Naive thymus-derived CD4-positive, alpha-beta T cell (primary cell): ENCODE measurements at regions of chr2 and their contacts with region 1.

Region 1: DNA sequence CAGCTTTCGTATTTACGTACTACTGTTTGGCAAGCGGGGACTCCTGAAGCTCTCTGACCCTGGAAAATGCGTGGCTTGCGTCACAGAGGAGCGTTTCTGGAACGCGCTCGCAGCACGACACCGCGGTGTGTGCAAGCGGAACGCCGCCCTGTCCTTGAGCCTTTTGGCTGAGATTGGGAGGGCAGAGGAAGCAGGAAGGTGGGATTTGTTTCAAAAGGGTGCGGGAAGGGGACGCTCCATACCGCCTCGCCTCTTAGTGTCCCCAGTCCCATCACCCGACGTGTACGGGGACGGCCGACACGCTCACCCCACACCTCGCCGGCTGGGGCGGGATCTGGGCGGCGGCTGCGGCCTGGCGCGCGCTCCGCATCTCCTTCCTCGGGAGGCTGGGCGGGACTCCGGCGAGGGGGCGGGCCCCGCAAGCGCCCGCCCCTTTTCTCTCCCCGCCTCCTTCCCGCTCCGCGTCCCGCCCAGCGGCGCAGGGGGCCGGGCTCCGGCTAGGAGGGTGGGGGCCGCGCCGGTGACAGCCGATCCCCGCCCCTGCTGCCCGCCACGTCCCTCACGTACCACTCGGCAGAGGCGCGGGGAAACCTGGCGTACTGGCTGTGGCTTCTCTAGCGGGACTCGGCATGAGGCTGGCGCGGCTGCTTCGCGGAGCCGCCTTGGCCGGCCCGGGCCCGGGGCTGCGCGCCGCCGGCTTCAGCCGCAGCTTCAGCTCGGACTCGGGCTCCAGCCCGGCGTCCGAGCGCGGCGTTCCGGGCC is at the start of gene PDK1:
- DNase-seq: peak; percentile 89 to 95 (median 94)
- ATAC-seq: peak; percentile 97
- H3K4me3 ChIP-seq: peak within 1 kb of the TSS; percentile 84
- H3K4me3 Mint-ChIP-seq: peak within 1 kb of the TSS; percentile 88 to 99 (median 93)
- H3K27ac ChIP-seq: peak within 1 kb of the TSS; percentile 98
- H3K27ac Mint-ChIP-seq: peak within 1 kb of the TSS; percentile 86 to 97 (median 95)
- H3K4me1 ChIP-seq: peaks cover 10 to 29% of the 10 kb centered on the region in 2 donors
- H3K4me1 Mint-ChIP-seq: peaks cover 37 to 72% (median 64%) of the 10 kb centered on the region in 7 donors
- H3K27me3 ChIP-seq: no peaks in the 10 kb centered on the region
- H3K27me3 Mint-ChIP-seq: peaks cover 0 to 5% (median 0%) of the 10 kb centered on the region in 5 donors
- total RNA-seq, gene PDK1: 56.0 to 70.6 (median 66.6) TPM

Region 2: DNA sequence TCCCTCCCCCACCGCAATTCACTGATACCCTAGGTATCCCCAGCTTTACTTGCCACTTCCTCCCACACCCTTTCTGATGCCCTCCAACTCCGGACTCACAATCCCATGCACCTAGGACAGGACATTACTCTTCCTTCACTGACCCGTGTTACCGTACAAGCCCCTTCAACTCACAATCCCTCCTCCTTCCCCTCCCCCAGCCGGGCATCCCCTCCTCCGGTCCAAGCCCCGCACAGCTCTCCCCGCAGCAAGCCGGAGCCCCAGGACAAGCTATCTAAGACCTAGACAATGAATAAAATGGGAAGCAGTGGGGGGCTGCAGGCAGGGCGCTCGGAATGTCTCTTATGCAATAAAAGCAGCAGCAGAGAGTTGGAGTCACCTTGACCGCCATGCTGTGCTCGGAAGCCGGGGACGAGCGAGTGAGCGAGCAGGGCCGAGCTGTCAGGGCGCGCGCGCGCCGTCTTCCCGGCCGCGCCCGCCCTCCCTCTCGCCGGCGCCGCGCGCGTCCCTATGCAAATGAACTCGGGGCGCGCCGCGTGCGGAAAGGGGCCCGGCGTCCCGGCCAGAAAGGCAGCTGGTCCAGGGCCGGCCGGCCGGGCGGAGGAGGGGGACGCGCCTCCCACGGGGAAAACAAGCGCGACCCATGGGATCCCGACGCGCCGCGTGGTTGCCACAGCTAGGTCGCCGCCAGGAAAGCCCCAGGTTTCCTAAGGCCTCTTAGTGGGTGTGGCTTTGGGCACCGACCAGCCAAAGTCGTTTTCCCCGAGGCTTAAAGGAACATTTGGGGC is 661.7 kb before region 1 on chr2 and contains the start of gene SLC25A12:
- CTCF ChIA-PET with region 1: no interaction called
- POLR2A ChIA-PET with region 1: no interaction called
- intact Hi-C with region 1: loop called (anchors 1 to 10 kb)
- DNase-seq: peak; percentile 53 to 79 (median 65)
- ATAC-seq: peak; percentile 96
- H3K4me3 ChIP-seq: peak within 1 kb of the TSS; percentile 93
- H3K4me3 Mint-ChIP-seq: peak within 1 kb of the TSS; percentile 93 to 98 (median 96)
- H3K27ac ChIP-seq: peak within 1 kb of the TSS; percentile 83
- H3K27ac Mint-ChIP-seq: peak within 1 kb of the TSS; percentile 66 to 94 (median 89)
- H3K4me1 ChIP-seq: peaks cover 11 to 17% of the 10 kb centered on the region in 2 donors
- H3K4me1 Mint-ChIP-seq: peaks cover 31 to 61% (median 52%) of the 10 kb centered on the region in 7 donors
- H3K27me3 ChIP-seq: no peaks in the 10 kb centered on the region
- H3K27me3 Mint-ChIP-seq: peaks cover 0 to 6% (median 0%) of the 10 kb centered on the region in 5 donors
- total RNA-seq, gene SLC25A12: 12.7 to 33.6 (median 14.0) TPM

Region 3: DNA sequence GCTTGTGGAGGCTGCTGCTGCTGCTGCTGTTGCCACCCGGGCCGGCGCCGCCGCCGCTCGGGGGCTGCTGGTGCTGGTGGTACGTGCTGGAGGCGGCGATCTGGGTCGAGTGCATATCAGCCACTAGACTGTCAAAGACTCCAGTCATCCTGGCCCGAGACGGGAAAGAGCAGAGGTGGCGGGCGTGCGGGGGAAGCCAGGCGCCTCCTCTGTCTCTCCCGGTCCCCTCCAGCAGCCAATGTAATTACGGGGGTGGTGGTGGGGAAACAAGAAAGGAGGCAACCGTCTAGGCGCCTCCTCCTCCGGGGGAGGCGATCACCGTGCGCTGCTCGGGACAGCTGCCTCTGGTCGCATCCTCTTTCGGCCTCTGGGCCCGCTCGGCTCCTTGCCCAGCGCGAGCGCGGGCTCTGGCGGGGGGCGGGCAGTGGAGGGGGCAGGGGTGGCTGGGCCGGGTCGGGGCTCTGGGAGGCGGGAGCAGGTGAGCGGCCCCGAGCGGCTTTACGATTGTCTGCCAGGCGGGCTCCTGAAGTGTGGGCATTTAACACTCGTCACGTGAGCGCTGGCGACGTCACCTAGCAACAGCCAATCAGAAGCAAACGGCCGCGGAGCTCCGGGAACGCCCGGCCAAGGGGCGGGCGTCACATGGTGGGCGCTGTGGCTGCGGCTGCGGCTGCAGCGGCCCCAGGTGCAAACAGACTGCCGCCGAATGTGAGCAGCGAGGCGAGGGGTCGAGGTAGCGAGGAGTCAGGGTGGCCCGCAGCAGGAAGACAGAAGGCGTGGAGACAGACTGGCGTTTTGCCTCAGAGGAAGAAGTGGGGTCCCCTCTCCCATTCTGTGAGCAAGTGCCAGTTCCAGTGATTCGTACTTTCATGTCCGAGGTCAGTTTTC is 453.1 kb before region 1 on chr2 and contains the start of gene DLX2:
- CTCF ChIA-PET with region 1: no interaction called
- POLR2A ChIA-PET with region 1: no interaction called
- intact Hi-C with region 1: loop called in 1 of 2 experiments (anchors 5 kb)
- DNase-seq: peak in 5 of 9 donors; percentile 23 to 43 (median 32)
- ATAC-seq: peak; percentile 61
- H3K4me3 ChIP-seq: peak within 1 kb of the TSS; percentile 32
- H3K4me3 Mint-ChIP-seq: peak within 1 kb of the TSS; percentile 74 to 88 (median 82)
- H3K27ac ChIP-seq: no peak within 1 kb of the TSS
- H3K27ac Mint-ChIP-seq: peak within 1 kb of the TSS in 8 of 9 donors; percentile 11 to 89 (median 80)
- H3K4me1 ChIP-seq: peaks cover 41 to 62% of the 10 kb centered on the region in 2 donors
- H3K4me1 Mint-ChIP-seq: peaks cover 29 to 59% (median 49%) of the 10 kb centered on the region in 7 donors
- H3K27me3 ChIP-seq: peaks cover 48 to 83% of the 10 kb centered on the region in 2 donors
- H3K27me3 Mint-ChIP-seq: peaks cover 65 to 91% (median 70%) of the 10 kb centered on the region in 5 donors
- total RNA-seq, gene DLX2: 0.16 to 0.34 TPM in 2 of 5 experiments, not detected in the others

Region 4: GRCh38 chr2:172496160-172496608 is 59.5 kb before region 1 on chr2:
- CTCF ChIA-PET with region 1: interaction called, 6 read pairs
- POLR2A ChIA-PET with region 1: interaction called, 42 read pairs
- intact Hi-C with region 1: loop called (anchors 1 to 5 kb)
- DNase-seq: peak in 7 of 9 donors; percentile 72 to 88 (median 83)
- ATAC-seq: peak; percentile 94
- H3K4me3 ChIP-seq: peak overlapping the region; percentile 22
- H3K4me3 Mint-ChIP-seq: peak overlapping the region; percentile 54 to 86 (median 77)
- H3K27ac ChIP-seq: peak overlapping the region; percentile 68
- H3K27ac Mint-ChIP-seq: peak overlapping the region; percentile 86 to 99 (median 97)
- H3K4me1 ChIP-seq: peaks cover 22 to 83% of the 10 kb centered on the region in 2 donors
- H3K4me1 Mint-ChIP-seq: peaks cover 32 to 94% (median 85%) of the 10 kb centered on the region in 7 donors
- H3K27me3 ChIP-seq: no peaks in the 10 kb centered on the region
- H3K27me3 Mint-ChIP-seq: no peaks in the 10 kb centered on the region

Region 5: DNA sequence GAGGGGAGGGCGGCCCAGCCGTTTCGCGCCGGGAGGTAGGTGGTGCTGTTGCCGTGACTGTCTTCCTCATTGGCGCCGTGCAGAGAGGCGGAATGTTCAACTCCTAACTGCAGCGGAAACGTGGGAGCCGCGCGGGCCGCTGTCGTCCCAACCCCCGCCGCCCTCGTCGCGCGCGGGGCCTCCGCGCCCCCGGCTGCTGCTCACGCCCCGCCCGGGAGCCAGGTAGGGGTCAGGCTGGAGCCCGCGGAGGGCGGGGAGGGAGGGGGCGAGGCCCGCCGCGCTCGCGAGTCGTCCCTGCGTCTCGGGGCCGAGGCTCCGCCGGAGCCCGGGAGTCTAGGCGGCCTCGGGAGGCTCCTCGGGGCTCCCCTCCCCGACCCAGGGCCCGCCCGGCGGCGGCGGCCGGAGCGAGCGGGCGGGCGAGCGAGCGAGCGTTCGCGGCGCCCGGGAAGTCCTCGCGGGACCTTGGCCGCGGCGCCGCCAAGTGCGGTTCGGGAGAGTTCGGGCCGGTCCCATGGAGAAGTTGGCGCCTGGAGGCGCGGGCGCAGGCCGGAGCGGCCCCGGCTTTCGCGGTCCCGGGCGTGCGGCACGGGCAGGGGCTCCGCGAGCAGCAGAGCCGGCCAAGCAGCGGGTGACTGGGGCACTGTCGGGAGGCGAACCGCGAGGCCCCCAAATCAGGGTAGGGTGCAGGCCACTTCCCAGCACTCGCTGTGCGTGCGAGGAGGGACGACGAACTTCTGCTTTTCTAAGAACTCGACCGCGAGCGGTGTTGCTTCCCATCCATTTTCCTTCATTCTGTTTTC is 520.3 kb after region 1 on chr2 and contains the start of gene MAP3K20:
- CTCF ChIA-PET with region 1: no interaction called
- POLR2A ChIA-PET with region 1: no interaction called
- intact Hi-C with region 1: loop called in 1 of 2 experiments (anchors 5 kb)
- DNase-seq: peak in 6 of 9 donors; percentile 13 to 73 (median 27)
- ATAC-seq: peak; percentile 84
- H3K4me3 ChIP-seq: peak within 1 kb of the TSS; percentile 45
- H3K4me3 Mint-ChIP-seq: peak within 1 kb of the TSS; percentile 56 to 89 (median 80)
- H3K27ac ChIP-seq: no peak within 1 kb of the TSS
- H3K27ac Mint-ChIP-seq: peak within 1 kb of the TSS in 2 of 9 donors; percentile 23 to 72
- H3K4me1 ChIP-seq: peaks cover 0 to 10% of the 10 kb centered on the region in 2 donors
- H3K4me1 Mint-ChIP-seq: peaks cover 6 to 25% (median 15%) of the 10 kb centered on the region in 7 donors
- H3K27me3 ChIP-seq: no peaks in the 10 kb centered on the region
- H3K27me3 Mint-ChIP-seq: peaks cover 30 to 57% (median 39%) of the 10 kb centered on the region in 5 donors
- total RNA-seq, gene MAP3K20: 0.30 to 17.0 (median 2.6) TPM

Region 6: DNA sequence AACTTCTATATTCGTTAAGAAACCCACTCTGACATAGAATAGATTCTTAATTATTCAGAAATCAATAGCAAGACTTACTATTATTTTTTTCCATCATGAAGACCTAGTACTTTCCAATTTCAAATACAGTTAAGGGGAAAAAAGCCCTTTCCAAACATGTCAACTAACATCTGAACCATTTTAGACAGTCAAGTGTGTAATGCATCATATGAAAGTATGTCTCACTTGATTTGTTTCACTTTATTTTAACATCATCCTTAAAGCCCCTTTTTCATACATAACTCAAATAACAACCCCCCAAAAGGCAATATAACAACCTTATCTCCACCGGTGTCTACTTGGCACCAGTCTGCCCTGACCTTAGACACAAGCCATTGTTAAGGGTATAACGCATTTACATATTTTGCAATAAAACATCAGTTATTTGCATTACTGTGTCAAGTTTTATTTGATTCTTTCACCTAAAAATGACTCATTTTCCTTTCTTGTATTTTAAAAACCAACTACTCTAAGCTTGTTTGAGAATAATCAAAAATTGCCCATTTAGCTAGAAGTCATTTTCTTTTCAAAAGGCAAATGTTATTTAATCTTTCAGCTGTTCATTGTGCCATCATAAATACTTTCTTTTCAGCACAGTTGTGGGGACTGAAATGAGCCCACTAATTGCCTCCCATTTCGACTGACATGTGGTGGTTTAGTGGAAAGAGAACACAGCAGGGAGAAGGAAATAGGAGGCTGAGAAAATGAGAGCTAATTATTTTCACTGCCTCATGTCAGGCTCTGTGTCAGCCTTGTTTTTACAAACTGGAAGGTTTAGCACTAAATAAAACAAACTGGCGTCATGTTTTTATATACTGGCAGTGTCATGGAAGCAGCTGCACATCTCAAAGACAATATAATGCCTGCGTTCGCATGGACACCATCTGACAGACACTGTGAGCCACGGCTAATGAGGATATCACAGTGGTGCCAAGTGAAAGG is 694.2 kb after region 1 on chr2:
- CTCF ChIA-PET with region 1: no interaction called
- POLR2A ChIA-PET with region 1: no interaction called
- intact Hi-C with region 1: no loop called
- DNase-seq: no peak
- ATAC-seq: no peak
- H3K4me3 ChIP-seq: no peak overlapping the region
- H3K4me3 Mint-ChIP-seq: no peak overlapping the region
- H3K27ac ChIP-seq: no peak overlapping the region
- H3K27ac Mint-ChIP-seq: no peak overlapping the region
- H3K4me1 ChIP-seq: no peaks in the 10 kb centered on the region
- H3K4me1 Mint-ChIP-seq: no peaks in the 10 kb centered on the region
- H3K27me3 ChIP-seq: no peaks in the 10 kb centered on the region
- H3K27me3 Mint-ChIP-seq: peaks cover 0 to 25% (median 19%) of the 10 kb centered on the region in 5 donors

Region 7: GRCh38 chr2:174487108-174487819 is 1931.6 kb after region 1 on chr2:
- CTCF ChIA-PET with region 1: no interaction called
- POLR2A ChIA-PET with region 1: no interaction called
- intact Hi-C with region 1: loop called in 1 of 2 experiments (anchors 5 kb)
- DNase-seq: peak; percentile 66 to 93 (median 78)
- ATAC-seq: peak; percentile 89
- H3K4me3 ChIP-seq: peak overlapping the region; percentile 90
- H3K4me3 Mint-ChIP-seq: peak overlapping the region; percentile 92 to 100 (median 98)
- H3K27ac ChIP-seq: peak overlapping the region; percentile 87
- H3K27ac Mint-ChIP-seq: peak overlapping the region; percentile 88 to 100 (median 96)
- H3K4me1 ChIP-seq: peaks cover 31 to 38% of the 10 kb centered on the region in 2 donors
- H3K4me1 Mint-ChIP-seq: peaks cover 37 to 83% (median 77%) of the 10 kb centered on the region in 7 donors
- H3K27me3 ChIP-seq: no peaks in the 10 kb centered on the region
- H3K27me3 Mint-ChIP-seq: no peaks in the 10 kb centered on the region